Tibial artery (tissue), 4 donors: ENCODE measurements at regions of chr1 and their contacts with region 1.

Region 1: DNA sequence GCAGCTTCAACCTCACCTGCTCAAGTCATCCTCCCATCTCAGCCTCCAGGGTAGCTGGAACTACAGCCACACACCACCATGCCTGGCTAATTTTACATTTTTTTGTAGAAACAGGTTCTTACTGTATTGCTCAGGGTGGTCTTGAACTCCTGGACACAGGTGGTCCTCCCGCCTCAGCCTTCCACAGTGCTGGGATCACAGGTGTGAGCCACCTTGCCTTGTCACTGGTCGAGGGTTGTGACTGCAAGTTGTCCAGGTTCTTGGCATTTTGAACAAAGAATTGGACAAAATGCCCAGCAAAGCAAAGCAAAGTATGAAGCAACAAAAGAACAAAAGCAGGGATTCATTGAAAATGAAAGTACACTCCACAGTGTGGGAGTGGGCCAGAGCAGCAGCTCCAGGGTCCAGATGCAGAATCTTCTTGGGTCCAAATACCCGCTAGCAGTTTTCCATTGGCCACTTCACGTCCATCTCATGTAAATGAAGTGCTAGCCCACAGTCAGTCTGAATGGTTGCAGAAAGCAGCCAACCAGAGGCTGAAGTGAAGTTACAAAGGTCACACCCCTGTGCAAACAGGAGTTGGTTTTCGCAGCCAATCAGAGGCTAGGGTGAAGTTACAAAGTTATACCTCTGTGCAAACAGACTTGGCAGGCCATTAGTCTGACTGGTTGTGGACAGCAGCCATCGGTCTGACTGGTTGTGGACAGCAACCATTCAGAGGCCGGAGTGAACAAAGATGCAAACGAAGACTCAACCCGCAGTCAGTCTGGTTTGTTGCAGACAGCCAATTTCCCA is 109.5 kb upstream of the KIF26B start:
- DNase-seq: no peak
- H3K4me3 ChIP-seq: no peak overlapping the region
- H3K27ac ChIP-seq: no peak overlapping the region
- H3K4me1 ChIP-seq: peaks cover 0 to 10% (median 0%) of the 10 kb centered on the region in 4 donors
- H3K27me3 ChIP-seq: no peaks in the 10 kb centered on the region
- CTCF ChIP-seq: no peak

Region 2: DNA sequence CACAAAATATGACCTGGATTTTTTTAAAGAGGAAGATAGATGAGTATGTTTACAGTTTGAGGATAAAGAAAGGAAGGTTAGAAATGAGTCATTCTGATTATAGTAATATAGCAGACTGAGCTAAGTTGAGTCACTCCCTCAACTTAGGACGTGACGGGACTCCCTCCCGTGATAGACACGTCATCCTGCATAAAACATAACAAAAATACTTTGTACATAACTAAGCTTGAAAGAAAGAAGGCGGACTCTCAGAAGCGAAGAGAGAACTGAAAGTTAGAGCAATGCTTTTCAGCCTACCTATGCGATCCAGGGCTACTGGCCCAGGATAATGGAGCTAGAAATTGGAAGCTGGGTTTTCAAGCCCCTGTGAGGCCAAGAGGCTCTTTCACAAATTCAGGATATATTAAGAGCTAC is 445.3 kb before region 1 on chr1:
- intact Hi-C with region 1: loop called (anchors 10 kb)
- DNase-seq: peak in 1 of 2 donors; percentile 35
- H3K4me3 ChIP-seq: peak overlapping the region in 1 of 2 donors; percentile 12
- H3K27ac ChIP-seq: peak overlapping the region; percentile 47 to 56
- H3K4me1 ChIP-seq: peaks cover 0 to 5% (median 0%) of the 10 kb centered on the region in 4 donors
- H3K27me3 ChIP-seq: no peaks in the 10 kb centered on the region
- CTCF ChIP-seq: no peak

Region 3: GRCh38 chr1:245107776-245108645 is 62.7 kb after region 1 on chr1:
- intact Hi-C with region 1: no loop called
- DNase-seq: no peak
- H3K4me3 ChIP-seq: no peak overlapping the region
- H3K27ac ChIP-seq: no peak overlapping the region
- H3K4me1 ChIP-seq: no peaks in the 10 kb centered on the region
- H3K27me3 ChIP-seq: no peaks in the 10 kb centered on the region
- CTCF ChIP-seq: no peak